Thyroid gland (tissue), 4 donors: ENCODE measurements at regions of chr11 and their contacts with region 1.

Region 1: DNA sequence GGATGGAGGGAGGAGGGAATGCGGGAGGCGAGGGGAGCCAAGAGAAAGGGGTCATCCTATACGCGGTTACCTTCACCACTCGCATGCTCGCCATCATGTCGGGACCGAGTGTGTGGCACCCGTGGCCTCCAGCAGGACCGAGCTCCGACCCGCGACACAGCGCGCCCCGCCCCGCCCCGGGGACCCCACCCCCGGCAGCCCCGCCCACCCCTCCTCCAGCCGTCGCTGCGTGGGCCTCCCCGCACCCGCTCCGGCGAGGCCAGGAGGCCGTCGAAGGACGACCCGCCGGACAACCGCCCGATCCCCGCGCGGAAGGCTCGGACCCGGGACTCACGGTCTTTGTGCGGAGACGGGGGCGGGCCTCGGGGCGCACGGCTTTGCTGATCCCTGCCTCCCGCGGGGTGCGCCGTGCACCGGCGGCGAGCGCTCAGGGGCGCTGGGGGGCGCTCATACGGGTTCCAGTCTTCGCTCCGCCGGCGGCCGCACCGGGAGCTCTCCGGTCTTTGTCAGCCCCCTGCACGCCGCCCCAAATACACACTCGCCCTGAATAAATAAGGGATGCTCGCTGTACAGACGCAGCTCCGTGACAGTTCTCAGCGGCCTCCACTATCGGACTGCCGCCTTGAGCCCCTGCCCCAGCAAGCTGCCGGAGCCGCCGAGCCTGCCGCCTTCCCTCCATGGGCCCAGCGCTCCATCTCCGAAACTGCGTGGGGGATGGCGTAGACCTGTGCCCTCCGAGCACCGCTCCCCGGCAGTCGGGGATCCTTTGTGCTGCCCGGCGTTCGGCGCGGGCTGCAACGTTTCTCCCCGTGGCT is at the start of gene UBE2L6:
- DNase-seq: peak; percentile 80 to 84
- H3K4me3 ChIP-seq: peak within 1 kb of the TSS; percentile 73 to 86 (median 78)
- H3K27ac ChIP-seq: peak within 1 kb of the TSS; percentile 10 to 84 (median 83)
- H3K4me1 ChIP-seq: peaks cover 7 to 18% of the 10 kb centered on the region in 2 donors
- H3K27me3 ChIP-seq: no peaks in the 10 kb centered on the region
- CTCF ChIP-seq: peak in 1 of 6 experiments; percentile 92
- POLR2A ChIP-seq: peak in 1 of 2 donors; percentile 31
- total RNA-seq, gene UBE2L6: 30.8 to 41.7 (median 38.8) TPM

Region 2: DNA sequence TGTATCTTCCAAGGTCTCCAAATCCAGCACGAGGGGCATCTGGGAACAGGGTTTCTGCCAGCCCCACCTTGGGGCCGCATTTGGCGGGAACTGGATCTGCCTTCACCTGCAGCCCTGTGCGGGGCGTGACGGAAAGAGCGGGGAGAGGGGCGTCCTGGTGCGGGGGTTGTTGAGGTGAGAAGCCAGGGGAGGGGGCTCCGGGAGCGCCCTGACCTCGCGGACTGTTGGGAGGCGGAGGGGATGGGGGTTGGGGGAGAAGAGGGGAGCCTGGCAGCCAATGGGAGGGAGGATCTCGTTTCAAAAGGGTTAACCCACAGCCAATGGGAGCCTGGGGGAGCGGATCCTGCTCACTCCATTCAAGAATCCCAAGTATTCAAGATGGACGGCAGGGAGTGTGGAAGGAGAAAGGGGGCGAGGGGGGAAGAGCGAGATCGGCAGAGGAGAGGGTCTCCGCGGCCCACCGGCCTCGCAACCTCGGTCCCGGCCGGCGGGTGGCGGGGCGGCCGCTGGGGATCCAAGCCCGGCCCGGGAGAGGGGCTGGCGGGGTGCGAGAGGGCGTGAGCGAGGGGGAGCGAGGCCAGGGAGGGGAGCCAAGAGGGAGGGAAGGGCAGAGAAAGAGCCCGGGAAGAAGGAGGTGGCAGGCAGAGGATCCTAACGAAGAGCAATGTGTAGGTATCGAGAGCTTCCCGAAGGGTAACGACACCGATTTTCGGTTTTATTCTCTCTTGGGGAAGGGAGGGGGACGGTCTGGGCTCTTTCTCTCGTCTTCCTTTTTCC is 70.5 kb after region 1 on chr11:
- intact Hi-C with region 1: loop called (anchors 5 kb)
- DNase-seq: peak; percentile 84 to 87
- H3K4me3 ChIP-seq: peak overlapping the region; percentile 65 to 88 (median 70)
- H3K27ac ChIP-seq: peak overlapping the region; percentile 66 to 73 (median 71)
- H3K4me1 ChIP-seq: peaks cover 44 to 50% of the 10 kb centered on the region in 2 donors
- H3K27me3 ChIP-seq: no peaks in the 10 kb centered on the region
- CTCF ChIP-seq: no peak
- POLR2A ChIP-seq: peak; percentile 11 to 76

Region 3: GRCh38 chr11:57936050-57936418 is 368.3 kb after region 1 on chr11:
- intact Hi-C with region 1: no loop called
- DNase-seq: no peak
- H3K4me3 ChIP-seq: no peak overlapping the region
- H3K27ac ChIP-seq: no peak overlapping the region
- H3K4me1 ChIP-seq: no peaks in the 10 kb centered on the region
- H3K27me3 ChIP-seq: no peaks in the 10 kb centered on the region
- CTCF ChIP-seq: no peak
- POLR2A ChIP-seq: no peak

Region 4: DNA sequence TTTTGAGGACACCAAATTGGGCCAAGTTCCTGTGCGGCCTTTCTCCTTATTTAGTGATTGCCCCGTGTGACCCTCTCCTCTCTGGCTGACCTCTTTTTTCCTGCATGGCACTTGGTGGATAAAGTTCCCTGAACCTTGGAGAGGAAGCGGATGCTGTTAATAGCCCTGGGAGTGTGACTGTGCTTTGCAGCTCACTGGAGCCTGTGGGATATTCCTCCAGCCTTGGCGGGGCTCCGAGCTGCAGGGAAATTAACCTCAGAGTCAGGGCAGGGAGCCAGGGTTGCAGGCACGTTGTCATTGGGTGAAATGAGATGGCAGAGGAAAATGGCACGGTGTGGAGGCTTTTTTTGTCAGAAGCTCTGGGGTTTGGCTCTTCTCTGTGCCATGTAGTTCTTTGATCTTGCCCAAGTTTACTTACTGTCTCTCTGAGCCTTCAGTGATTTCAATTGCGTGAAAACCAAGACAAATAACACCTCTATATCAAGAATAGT is 456.9 kb after region 1 on chr11:
- intact Hi-C with region 1: no loop called
- DNase-seq: peak; percentile 44 to 75
- H3K4me3 ChIP-seq: no peak overlapping the region
- H3K27ac ChIP-seq: peak overlapping the region in 2 of 3 donors; percentile 3 to 48
- H3K4me1 ChIP-seq: peaks cover 0 to 11% of the 10 kb centered on the region in 2 donors
- H3K27me3 ChIP-seq: no peaks in the 10 kb centered on the region
- CTCF ChIP-seq: no peak
- POLR2A ChIP-seq: no peak